ENCODE measurements at regions of chr1 and their contacts with region 1.

Region 1: GRCh38 chr1:100037927-100038659 is 68.3 kb downstream of the SLC35A3 start:
- DNase-seq: peak; percentile 84
- H3K4me3 Mint-ChIP-seq: peak overlapping the region; percentile 90
- H3K27ac Mint-ChIP-seq: peak overlapping the region; percentile 97
- H3K4me1 Mint-ChIP-seq: peaks cover 18% of the 10 kb centered on the region
- H3K27me3 Mint-ChIP-seq: no peaks in the 10 kb centered on the region
- CTCF ChIP-seq: no peak

Region 2: GRCh38 chr1:99685516-99686180 is 352.4 kb before region 1 on chr1:
- CTCF ChIA-PET with region 1: no interaction called
- POLR2A ChIA-PET with region 1: no interaction called
- intact Hi-C with region 1: no loop called
- DNase-seq: peak; percentile 92
- H3K4me3 Mint-ChIP-seq: no peak overlapping the region
- H3K27ac Mint-ChIP-seq: no peak overlapping the region
- H3K4me1 Mint-ChIP-seq: peaks cover 24% of the 10 kb centered on the region
- H3K27me3 Mint-ChIP-seq: no peaks in the 10 kb centered on the region
- CTCF ChIP-seq: peak; percentile 54

Region 3: DNA sequence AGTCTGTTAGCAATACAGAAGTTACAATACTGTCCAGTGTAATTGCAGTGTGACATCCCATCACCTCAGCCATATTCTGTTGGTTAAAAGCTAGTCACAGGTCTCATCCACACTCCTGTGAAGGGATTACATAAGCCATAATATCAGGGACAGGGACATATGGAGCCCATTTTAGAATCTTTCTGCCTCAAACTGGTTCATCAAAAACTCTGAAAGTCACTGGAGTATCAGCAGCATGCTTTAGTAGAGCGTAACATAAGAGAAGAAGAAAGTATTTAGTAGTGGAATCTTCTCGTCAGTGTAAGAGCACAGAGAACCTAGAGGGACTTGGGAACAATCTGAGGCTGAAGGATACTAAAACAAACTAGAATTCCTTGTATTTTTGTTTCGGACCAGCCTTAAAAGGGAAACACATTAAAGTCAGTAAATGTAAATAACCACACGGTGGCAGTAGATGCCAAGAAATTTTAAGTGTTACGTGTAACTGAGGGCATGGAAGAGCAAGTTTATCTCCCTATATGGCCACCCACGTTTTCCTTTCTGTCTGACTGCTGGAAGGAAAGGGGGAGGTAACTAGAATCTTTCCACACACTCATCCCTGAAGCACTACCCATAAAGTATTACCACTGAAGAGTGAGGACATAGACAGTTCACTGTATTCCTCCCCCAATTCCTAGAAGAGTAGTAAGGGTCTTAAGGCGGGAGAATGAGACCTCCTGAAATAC is 229.5 kb before region 1 on chr1:
- CTCF ChIA-PET with region 1: no interaction called
- POLR2A ChIA-PET with region 1: no interaction called
- intact Hi-C with region 1: loop called (anchors 1 kb)
- DNase-seq: peak; percentile 90
- H3K4me3 Mint-ChIP-seq: no peak overlapping the region
- H3K27ac Mint-ChIP-seq: no peak overlapping the region
- H3K4me1 Mint-ChIP-seq: no peaks in the 10 kb centered on the region
- H3K27me3 Mint-ChIP-seq: no peaks in the 10 kb centered on the region
- CTCF ChIP-seq: peak; percentile 49

Region 4: DNA sequence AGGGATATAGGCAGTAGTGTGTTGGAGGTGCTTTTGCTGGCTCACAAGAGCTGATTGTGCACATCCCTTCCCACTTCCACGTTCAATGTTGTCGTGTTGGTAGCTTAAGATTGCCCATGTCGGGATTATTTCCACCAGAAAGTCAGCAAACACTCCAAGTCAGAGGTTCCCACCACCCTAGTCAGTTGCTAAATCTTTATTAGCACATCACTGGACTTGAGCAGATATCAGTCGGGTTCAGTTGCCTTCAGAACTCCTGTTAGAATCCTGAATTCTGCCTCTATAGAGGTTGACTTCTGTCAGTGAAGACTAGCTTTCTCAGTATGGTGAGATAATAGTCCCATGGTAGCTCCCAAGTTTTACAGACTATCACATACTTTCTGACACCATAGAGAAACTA is 177.4 kb before region 1 on chr1:
- CTCF ChIA-PET with region 1: no interaction called
- POLR2A ChIA-PET with region 1: no interaction called
- intact Hi-C with region 1: no loop called
- DNase-seq: no peak
- H3K4me3 Mint-ChIP-seq: no peak overlapping the region
- H3K27ac Mint-ChIP-seq: no peak overlapping the region
- H3K4me1 Mint-ChIP-seq: no peaks in the 10 kb centered on the region
- H3K27me3 Mint-ChIP-seq: no peaks in the 10 kb centered on the region
- CTCF ChIP-seq: no peak

Region 5: GRCh38 chr1:99969729-99970621 is 68.1 kb before region 1 on chr1 and contains the start of gene SLC35A3:
- CTCF ChIA-PET with region 1: no interaction called
- POLR2A ChIA-PET with region 1: interaction called, 47 read pairs
- intact Hi-C with region 1: loop called (anchors 1 kb)
- DNase-seq: peak; percentile 75
- H3K4me3 Mint-ChIP-seq: peak within 1 kb of the TSS; percentile 99
- H3K27ac Mint-ChIP-seq: peak within 1 kb of the TSS; percentile 92
- H3K4me1 Mint-ChIP-seq: peaks cover 6% of the 10 kb centered on the region
- H3K27me3 Mint-ChIP-seq: no peaks in the 10 kb centered on the region
- CTCF ChIP-seq: no peak
- total RNA-seq, gene SLC35A3: 15.1 and 20.7 TPM in 2 replicates

Region 6: DNA sequence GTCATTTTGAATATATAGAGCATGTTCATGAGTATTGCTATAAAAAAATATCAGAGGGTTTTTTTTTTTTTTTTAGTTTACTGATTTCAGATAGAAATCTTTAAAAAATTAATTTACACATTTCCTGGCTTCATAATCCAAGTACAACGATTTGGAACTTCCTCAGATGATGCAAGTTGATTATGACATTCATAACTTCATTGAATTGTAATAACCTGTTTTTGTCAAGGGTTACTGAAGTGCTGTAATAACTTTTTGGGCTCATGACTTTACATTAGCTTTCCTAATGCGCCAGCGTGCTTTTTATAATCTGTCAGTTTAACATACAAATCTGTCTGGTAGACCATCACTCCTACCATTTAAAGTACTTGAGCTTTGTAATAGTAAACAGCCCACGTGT is 13.3 kb after region 1 on chr1:
- CTCF ChIA-PET with region 1: interaction called, 3 read pairs
- POLR2A ChIA-PET with region 1: interaction called, 40 read pairs
- intact Hi-C with region 1: no loop called
- DNase-seq: no peak
- H3K4me3 Mint-ChIP-seq: no peak overlapping the region
- H3K27ac Mint-ChIP-seq: peak overlapping the region; percentile 37
- H3K4me1 Mint-ChIP-seq: peaks cover 28% of the 10 kb centered on the region
- H3K27me3 Mint-ChIP-seq: no peaks in the 10 kb centered on the region
- CTCF ChIP-seq: no peak

Region 7: DNA sequence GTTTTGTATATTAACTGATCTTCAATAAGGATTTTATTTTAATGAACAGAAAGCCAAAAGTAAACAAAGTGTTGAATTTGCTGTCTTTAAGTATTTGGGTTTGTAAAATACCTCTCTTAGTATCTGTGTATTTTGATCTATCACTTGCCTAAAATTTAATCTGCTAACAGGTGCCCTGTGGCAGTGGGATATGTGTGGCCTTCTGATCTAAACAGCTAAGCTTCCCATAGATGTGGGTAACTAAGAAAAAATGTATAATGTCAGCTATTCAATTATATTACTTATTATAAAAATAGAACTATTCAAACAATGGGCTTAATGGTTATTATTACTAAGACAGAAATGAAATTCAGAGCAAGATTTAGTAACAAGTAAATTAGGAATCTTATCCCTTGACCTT is 124.8 kb after region 1 on chr1:
- CTCF ChIA-PET with region 1: no interaction called
- POLR2A ChIA-PET with region 1: no interaction called
- intact Hi-C with region 1: no loop called
- DNase-seq: no peak
- H3K4me3 Mint-ChIP-seq: no peak overlapping the region
- H3K27ac Mint-ChIP-seq: no peak overlapping the region
- H3K4me1 Mint-ChIP-seq: no peaks in the 10 kb centered on the region
- H3K27me3 Mint-ChIP-seq: no peaks in the 10 kb centered on the region
- CTCF ChIP-seq: no peak

Region 8: GRCh38 chr1:100265931-100266740 is 228.0 kb after region 1 on chr1 and contains the start of gene RTCA:
- CTCF ChIA-PET with region 1: interaction called, 6 read pairs
- POLR2A ChIA-PET with region 1: interaction called, 10 read pairs
- intact Hi-C with region 1: no loop called
- DNase-seq: peak; percentile 98
- H3K4me3 Mint-ChIP-seq: peak within 1 kb of the TSS; percentile 90
- H3K27ac Mint-ChIP-seq: peak within 1 kb of the TSS; percentile 85
- H3K4me1 Mint-ChIP-seq: peaks cover 10% of the 10 kb centered on the region
- H3K27me3 Mint-ChIP-seq: no peaks in the 10 kb centered on the region
- CTCF ChIP-seq: no peak
- total RNA-seq, gene RTCA: 60.4 and 62.3 TPM in 2 replicates

Region 9: GRCh38 chr1:100895540-100896483 is 857.7 kb after region 1 on chr1 and contains the start of gene SLC30A7:
- CTCF ChIA-PET with region 1: no interaction called
- POLR2A ChIA-PET with region 1: interaction called, 26 read pairs
- intact Hi-C with region 1: no loop called
- DNase-seq: peak; percentile 96
- H3K4me3 Mint-ChIP-seq: peak within 1 kb of the TSS; percentile 96
- H3K27ac Mint-ChIP-seq: peak within 1 kb of the TSS; percentile 99
- H3K4me1 Mint-ChIP-seq: peaks cover 6% of the 10 kb centered on the region
- H3K27me3 Mint-ChIP-seq: no peaks in the 10 kb centered on the region
- CTCF ChIP-seq: no peak
- total RNA-seq, gene SLC30A7: 55.0 and 59.5 TPM in 2 replicates

Region 10: GRCh38 chr1:100982792-100983191 is 944.7 kb after region 1 on chr1:
- CTCF ChIA-PET with region 1: no interaction called
- POLR2A ChIA-PET with region 1: no interaction called
- intact Hi-C with region 1: no loop called
- DNase-seq: no peak
- H3K4me3 Mint-ChIP-seq: no peak overlapping the region
- H3K27ac Mint-ChIP-seq: peak overlapping the region; percentile 76
- H3K4me1 Mint-ChIP-seq: no peaks in the 10 kb centered on the region
- H3K27me3 Mint-ChIP-seq: no peaks in the 10 kb centered on the region
- CTCF ChIP-seq: no peak